Mammary epithelial cell (primary cell): ENCODE measurements at regions of chr15 and their contacts with region 1.

Region 1: DNA sequence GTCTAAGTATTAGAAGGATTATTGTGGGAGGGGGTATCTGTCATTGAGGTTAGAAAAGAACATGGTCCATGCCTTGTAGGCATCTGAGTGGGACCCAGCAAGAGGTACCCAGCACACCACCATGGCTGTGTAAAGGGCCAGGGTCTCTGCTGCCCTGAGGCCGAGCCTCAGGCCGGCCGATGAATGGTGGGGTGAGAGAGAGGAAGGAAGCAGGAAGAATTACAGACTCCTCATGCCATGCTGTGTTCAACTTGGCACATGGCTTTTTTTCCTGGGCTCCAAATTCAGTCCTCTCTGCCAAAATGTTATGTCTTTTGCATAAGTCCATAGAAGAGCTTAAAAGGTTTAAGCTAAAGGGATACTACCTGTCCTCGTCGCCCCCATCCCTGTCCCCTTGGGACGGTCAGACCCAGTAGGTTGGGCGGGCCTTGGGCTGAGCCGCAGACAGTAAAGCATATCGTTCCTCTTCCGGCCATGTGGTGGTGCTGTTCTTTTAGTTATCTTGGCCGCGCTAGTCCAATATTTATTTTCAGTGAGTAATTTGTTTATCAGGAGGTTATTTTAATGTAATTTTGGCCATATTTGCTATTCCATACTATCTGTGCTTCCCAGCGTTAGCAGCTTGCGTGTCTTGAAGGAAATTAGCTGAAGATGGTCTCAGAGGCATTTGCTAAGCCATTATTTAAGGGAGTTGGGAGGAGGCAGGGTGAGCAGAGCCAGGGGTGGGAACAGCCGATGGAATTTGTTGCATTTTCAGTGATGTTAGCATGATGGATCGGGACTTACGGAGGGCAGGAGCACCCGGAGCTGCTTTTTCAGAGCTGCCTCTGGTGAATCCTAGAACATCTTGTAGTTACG is 152.4 kb downstream of the AGBL1 start:
- DNase-seq: peak; percentile 29
- H3K4me3 ChIP-seq: no peak overlapping the region
- H3K27ac ChIP-seq: no peak overlapping the region
- H3K4me1 ChIP-seq: peaks cover 3% of the 10 kb centered on the region
- H3K27me3 ChIP-seq: no peaks in the 10 kb centered on the region
- CTCF ChIP-seq: peak; percentile 64 to 75

Region 2: DNA sequence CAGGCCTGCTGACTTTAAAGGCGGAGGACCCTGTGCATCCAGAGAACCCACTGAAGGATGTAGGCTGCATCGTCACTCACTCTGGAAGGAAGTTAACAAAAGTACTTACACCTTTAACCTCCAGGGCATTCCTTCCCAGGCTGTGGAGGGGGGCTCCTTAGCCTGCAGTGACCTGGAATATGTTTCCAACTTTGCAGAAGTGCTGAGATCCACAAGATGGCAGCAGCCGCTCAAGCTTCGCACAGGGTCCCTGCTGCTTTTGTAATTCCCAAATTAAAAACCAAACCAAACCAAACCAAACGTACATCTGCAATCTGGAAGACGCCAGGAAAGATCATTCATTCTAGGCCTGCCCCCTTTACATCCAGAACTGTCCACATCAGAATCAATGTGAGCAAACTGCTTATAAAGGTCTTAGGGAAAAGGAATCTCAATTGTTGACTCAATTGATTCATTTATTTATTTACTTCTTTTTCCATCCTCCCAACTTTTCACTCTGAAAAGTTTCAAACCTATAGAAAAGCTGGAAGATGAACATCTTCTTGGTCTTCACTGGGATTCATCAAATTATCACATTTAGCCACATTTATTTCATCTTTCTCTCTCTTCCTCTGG is 366.9 kb before region 1 on chr15:
- CTCF ChIA-PET with region 1: no interaction called
- dilution Hi-C with region 1: no loop called
- in situ Hi-C with region 1: no loop called
- intact Hi-C with region 1: loop called (anchors 5 kb)
- DNase-seq: no peak
- H3K4me3 ChIP-seq: no peak overlapping the region
- H3K27ac ChIP-seq: no peak overlapping the region
- H3K4me1 ChIP-seq: no peaks in the 10 kb centered on the region
- H3K27me3 ChIP-seq: no peaks in the 10 kb centered on the region
- CTCF ChIP-seq: peak; percentile 55 to 76

Region 3: DNA sequence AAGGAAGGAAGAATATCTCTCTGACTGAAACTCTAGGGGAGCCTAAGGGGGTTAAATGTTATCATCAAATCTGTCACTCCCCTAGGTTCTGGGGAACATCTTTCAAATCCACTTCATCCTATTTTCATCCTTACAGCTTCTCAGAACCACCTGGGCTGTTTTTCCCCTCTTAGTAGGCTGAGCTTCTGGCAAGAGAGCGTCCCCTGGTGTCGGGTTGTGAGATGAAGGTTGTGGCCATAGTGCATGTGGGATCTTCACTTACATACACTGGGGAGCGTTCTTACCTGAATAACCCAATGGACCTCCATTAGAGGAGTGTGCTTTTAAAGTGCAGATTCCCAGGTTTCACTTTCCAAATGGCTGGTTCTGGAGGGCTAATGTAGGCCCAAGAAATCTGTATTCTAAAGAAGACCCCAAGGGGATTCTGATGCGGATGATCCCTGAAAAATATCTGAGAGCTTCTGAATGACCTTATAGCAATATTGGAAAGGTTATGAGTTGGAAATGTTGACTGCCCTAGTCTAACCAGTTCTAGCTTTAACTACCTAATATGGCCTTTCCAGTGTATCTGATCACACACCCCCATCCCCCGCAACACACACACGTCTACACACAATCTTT is 511.3 kb after region 1 on chr15:
- CTCF ChIA-PET with region 1: interaction called, 5 read pairs
- dilution Hi-C with region 1: no loop called
- in situ Hi-C with region 1: loop called (anchors 5 kb)
- intact Hi-C with region 1: loop called (anchors 1 kb)
- DNase-seq: peak; percentile 43
- H3K4me3 ChIP-seq: no peak overlapping the region
- H3K27ac ChIP-seq: no peak overlapping the region
- H3K4me1 ChIP-seq: no peaks in the 10 kb centered on the region
- H3K27me3 ChIP-seq: no peaks in the 10 kb centered on the region
- CTCF ChIP-seq: peak; percentile 92 to 98

Region 4: GRCh38 chr15:86756692-86757091 is 524.6 kb after region 1 on chr15:
- CTCF ChIA-PET with region 1: no interaction called
- dilution Hi-C with region 1: no loop called
- in situ Hi-C with region 1: no loop called
- intact Hi-C with region 1: loop called (anchors 1 kb)
- DNase-seq: no peak
- H3K4me3 ChIP-seq: no peak overlapping the region
- H3K27ac ChIP-seq: no peak overlapping the region
- H3K4me1 ChIP-seq: no peaks in the 10 kb centered on the region
- H3K27me3 ChIP-seq: peaks cover 3% of the 10 kb centered on the region
- CTCF ChIP-seq: peak in 1 of 2 donors; percentile 25